ENCODE measurements at regions of chr10 and their contacts with region 1.

Region 1: DNA sequence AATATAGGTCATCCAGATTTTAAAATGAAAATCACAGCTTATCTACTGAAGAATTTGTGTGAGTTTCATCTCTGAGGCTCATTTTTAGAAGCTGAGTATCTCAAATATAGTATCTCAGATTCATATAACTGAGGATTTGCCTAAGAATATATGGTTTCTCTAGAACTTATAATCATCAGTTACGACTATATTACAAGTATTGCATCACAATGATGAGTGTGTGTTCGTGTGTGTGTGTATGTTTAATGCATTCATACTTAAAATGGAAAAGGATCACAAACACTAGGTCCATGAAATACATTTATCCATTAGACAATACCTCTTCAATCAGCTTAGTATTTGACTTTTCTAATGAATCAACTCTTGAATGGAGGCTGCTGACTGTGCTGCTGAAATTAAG is 21.3 kb downstream of the RUFY2 start:
- DNase-seq: no peak
- H3K4me3 Mint-ChIP-seq: no peak overlapping the region
- H3K27ac Mint-ChIP-seq: no peak overlapping the region
- H3K4me1 Mint-ChIP-seq: no peaks in the 10 kb centered on the region
- H3K27me3 Mint-ChIP-seq: no peaks in the 10 kb centered on the region

Region 2: GRCh38 chr10:68362590-68362989 is 23.1 kb before region 1 on chr10:
- CTCF ChIA-PET with region 1: no interaction called
- POLR2A ChIA-PET with region 1: no interaction called
- DNase-seq: no peak
- H3K4me3 Mint-ChIP-seq: no peak overlapping the region
- H3K27ac Mint-ChIP-seq: no peak overlapping the region
- H3K4me1 Mint-ChIP-seq: no peaks in the 10 kb centered on the region
- H3K27me3 Mint-ChIP-seq: no peaks in the 10 kb centered on the region

Region 3: GRCh38 chr10:68871731-68872342 is 486.1 kb after region 1 on chr10:
- CTCF ChIA-PET with region 1: no interaction called
- POLR2A ChIA-PET with region 1: interaction called, 11 read pairs
- DNase-seq: no peak
- H3K4me3 Mint-ChIP-seq: no peak overlapping the region
- H3K27ac Mint-ChIP-seq: no peak overlapping the region
- H3K4me1 Mint-ChIP-seq: peaks cover 6% of the 10 kb centered on the region
- H3K27me3 Mint-ChIP-seq: no peaks in the 10 kb centered on the region